ENCODE measurements at regions of chr11 and their contacts with region 1.

Region 1: GRCh38 chr11:32792948-32793475 is 1.4 kb downstream of the CCDC73 start:
- DNase-seq: peak; percentile 27
- ATAC-seq: peak; percentile 87
- H3K4me3 ChIP-seq: no peak overlapping the region
- H3K27ac ChIP-seq: no peak overlapping the region
- H3K4me1 ChIP-seq: no peaks in the 10 kb centered on the region
- H3K27me3 ChIP-seq: peaks cover 4% of the 10 kb centered on the region; the same call in 1 of the 2 replicates
- CTCF ChIP-seq: peak; percentile 57
- POLR2A ChIP-seq: no peak
- RAD21 ChIP-seq: peak; percentile 50

Region 2: DNA sequence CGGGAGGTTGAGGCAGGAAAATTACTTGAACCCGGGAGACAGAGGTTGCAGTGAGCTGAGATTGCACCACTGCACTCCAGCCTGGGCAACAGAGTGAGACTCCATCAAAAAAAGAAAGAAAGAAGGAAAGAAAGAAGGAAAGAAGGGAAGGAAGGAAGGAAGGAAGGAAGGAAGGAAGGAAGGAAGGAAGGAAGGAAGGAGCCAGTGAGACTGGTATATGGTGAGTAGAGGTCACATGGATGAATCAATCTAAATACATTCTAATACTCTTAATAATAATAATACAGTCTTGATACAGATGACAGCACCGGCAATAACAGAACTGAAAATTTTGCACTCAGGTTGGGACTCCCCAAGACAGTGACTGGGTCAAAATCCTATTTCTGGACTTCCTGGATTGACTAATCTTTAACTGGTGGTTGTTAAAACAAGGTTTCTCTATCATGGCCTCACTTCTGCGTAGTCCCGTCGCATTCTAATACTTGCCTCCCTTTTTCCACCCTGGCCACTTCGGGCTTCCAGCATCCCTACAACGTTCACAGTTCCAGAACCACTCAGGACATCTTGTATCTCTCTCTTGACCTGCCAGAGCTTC is 262.9 kb before region 1 on chr11:
- CTCF ChIA-PET with region 1: no interaction called
- POLR2A ChIA-PET with region 1: no interaction called
- dilution Hi-C with region 1: no loop called
- in situ Hi-C with region 1: no loop called
- intact Hi-C with region 1: loop called (anchors 5 kb)
- DNase-seq: no peak
- ATAC-seq: no peak
- H3K4me3 ChIP-seq: no peak overlapping the region
- H3K27ac ChIP-seq: no peak overlapping the region
- H3K4me1 ChIP-seq: no peaks in the 10 kb centered on the region
- H3K27me3 ChIP-seq: no peaks in the 10 kb centered on the region
- CTCF ChIP-seq: no peak
- POLR2A ChIP-seq: no peak
- RAD21 ChIP-seq: no peak

Region 3: GRCh38 chr11:32713496-32713895 is 79.5 kb before region 1 on chr11:
- CTCF ChIA-PET with region 1: no interaction called
- POLR2A ChIA-PET with region 1: no interaction called
- dilution Hi-C with region 1: no loop called
- in situ Hi-C with region 1: no loop called
- intact Hi-C with region 1: loop called (anchors 5 kb)
- DNase-seq: no peak
- ATAC-seq: no peak
- H3K4me3 ChIP-seq: no peak overlapping the region
- H3K27ac ChIP-seq: no peak overlapping the region
- H3K4me1 ChIP-seq: no peaks in the 10 kb centered on the region
- H3K27me3 ChIP-seq: peaks cover 8% of the 10 kb centered on the region; the same call in 1 of the 2 replicates
- CTCF ChIP-seq: peak; percentile 34
- POLR2A ChIP-seq: no peak
- RAD21 ChIP-seq: peak; percentile 23; the same call in 1 of the 2 replicates